ENCODE measurements at regions of chr1 and their contacts with region 1.

Region 1: GRCh38 chr1:10788592-10789006 is 7.8 kb downstream of the CASZ1 start:
- DNase-seq: peak; percentile 70 to 88 (median 82)
- ATAC-seq: peak; percentile 90 to 96 (median 92)
- H3K4me3 ChIP-seq: peak overlapping the region in 6 of 12 donors; percentile 9 to 30 (median 20)
- H3K27ac ChIP-seq: peak overlapping the region in 10 of 12 donors; percentile 7 to 95 (median 52)
- H3K4me1 ChIP-seq: peaks cover 0 to 93% (median 44%) of the 10 kb centered on the region in 12 donors
- H3K27me3 ChIP-seq: peaks cover 0 to 38% (median 0%) of the 10 kb centered on the region in 9 donors
- CTCF ChIP-seq: peak in 11 of 12 donors; percentile 48 to 74 (median 52)
- POLR2A ChIP-seq: no peak

Region 2: GRCh38 chr1:10530281-10530740 is 258.3 kb before region 1 on chr1:
- intact Hi-C with region 1: loop called in 4 of 10 experiments (anchors 5 to 10 kb)
- DNase-seq: peak in 4 of 5 donors; percentile 35 to 68 (median 38)
- ATAC-seq: peak in 3 of 4 donors; percentile 17 to 61 (median 35)
- H3K4me3 ChIP-seq: no peak overlapping the region
- H3K27ac ChIP-seq: peak overlapping the region in 3 of 12 donors; percentile 3 to 71 (median 66)
- H3K4me1 ChIP-seq: peaks cover 0 to 51% (median 31%) of the 10 kb centered on the region in 12 donors
- H3K27me3 ChIP-seq: no peaks in the 10 kb centered on the region
- CTCF ChIP-seq: peak; percentile 39 to 78 (median 68)
- POLR2A ChIP-seq: no peak

Region 3: DNA sequence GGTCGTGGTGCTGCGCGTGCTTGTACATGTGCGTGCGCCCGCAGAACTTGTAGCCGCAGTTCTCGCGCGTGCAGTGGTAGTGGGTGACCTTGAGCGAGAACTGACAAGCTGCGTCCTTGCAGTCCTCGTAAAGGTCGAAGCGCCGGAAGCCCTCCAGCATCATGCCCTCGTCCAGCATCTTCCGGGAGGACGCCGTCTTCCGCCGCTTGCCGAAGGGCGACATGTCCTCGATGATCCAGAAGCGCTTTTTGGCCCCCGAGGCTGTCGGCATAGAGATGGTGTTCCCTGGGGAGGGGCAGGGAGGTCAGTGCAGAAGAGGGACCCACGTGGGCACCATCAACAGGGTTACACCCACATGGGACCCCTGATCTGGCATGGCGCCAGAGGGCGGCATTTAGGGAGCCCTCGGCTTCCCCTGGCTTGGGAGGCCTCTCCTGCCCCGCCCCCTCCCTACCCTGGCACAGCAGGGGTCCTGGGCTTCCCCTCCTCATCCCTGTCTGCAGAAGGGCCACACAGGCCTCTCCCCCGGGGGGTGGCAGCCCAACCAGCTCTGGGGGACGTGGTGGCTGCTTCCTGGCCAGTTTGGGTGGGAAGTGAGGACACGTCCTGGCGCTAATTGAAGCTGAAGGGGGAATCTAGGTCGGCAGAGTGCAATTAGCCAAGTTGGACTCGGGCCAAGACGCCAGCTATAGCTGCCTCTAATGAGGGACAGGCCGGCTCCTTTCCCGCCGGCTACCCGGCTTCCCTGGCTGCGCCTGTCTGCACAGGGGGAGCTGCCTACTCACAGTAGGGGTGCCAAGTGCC is 148.6 kb before region 1 on chr1:
- intact Hi-C with region 1: no loop called
- DNase-seq: peak in 4 of 5 donors; percentile 48 to 79 (median 76)
- ATAC-seq: peak; percentile 31 to 66 (median 57)
- H3K4me3 ChIP-seq: no peak overlapping the region
- H3K27ac ChIP-seq: peak overlapping the region in 5 of 12 donors; percentile 1 to 83 (median 46)
- H3K4me1 ChIP-seq: peaks cover 0 to 35% (median 21%) of the 10 kb centered on the region in 12 donors
- H3K27me3 ChIP-seq: peaks cover 0 to 7% (median 0%) of the 10 kb centered on the region in 9 donors
- CTCF ChIP-seq: no peak
- POLR2A ChIP-seq: no peak

Region 4: GRCh38 chr1:10714337-10715114 is 74.1 kb before region 1 on chr1:
- intact Hi-C with region 1: loop called in 1 of 10 experiments (anchors 10 kb)
- DNase-seq: peak in 4 of 5 donors; percentile 74 to 82 (median 78)
- ATAC-seq: peak; percentile 74 to 83 (median 81)
- H3K4me3 ChIP-seq: no peak overlapping the region
- H3K27ac ChIP-seq: peak overlapping the region in 11 of 12 donors; percentile 31 to 86 (median 71)
- H3K4me1 ChIP-seq: peaks cover 3 to 84% (median 48%) of the 10 kb centered on the region in 12 donors
- H3K27me3 ChIP-seq: peaks cover 0 to 8% (median 0%) of the 10 kb centered on the region in 9 donors
- CTCF ChIP-seq: no peak
- POLR2A ChIP-seq: no peak

Region 5: DNA sequence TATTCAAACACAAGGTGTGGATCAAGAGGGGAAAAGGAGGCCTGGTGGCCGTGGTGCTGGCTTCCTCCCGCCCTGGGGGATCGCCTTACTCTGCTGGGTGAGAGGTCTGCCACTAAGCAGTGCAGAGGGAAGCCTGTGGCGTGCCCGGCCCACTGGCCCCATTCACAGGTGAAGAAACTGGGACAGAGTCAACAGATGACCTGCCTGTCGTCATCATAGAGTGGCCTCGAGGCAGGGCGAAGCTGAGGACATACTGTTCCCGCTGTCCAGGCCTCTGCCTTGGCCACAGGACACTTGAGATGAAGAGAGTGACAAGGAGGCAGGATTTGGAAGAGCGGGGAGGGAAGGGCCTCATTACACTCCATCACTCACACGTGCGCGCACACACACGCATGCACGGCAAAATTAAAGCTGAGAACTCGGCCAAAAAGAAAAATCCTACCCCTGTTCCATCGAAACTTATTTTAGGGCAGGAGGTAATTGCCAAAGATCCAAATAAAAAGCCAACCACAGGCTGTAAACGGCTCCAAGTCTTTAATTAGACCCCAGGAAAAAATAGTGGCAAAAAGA is 42.6 kb before region 1 on chr1:
- intact Hi-C with region 1: loop called in 2 of 10 experiments (anchors 5 kb)
- DNase-seq: peak in 2 of 5 donors; percentile 58 to 89
- ATAC-seq: peak; percentile 55 to 91 (median 78)
- H3K4me3 ChIP-seq: no peak overlapping the region
- H3K27ac ChIP-seq: peak overlapping the region in 10 of 12 donors; percentile 17 to 87 (median 60)
- H3K4me1 ChIP-seq: peaks cover 0 to 65% (median 20%) of the 10 kb centered on the region in 12 donors
- H3K27me3 ChIP-seq: no peaks in the 10 kb centered on the region
- CTCF ChIP-seq: no peak
- POLR2A ChIP-seq: no peak

Region 6: GRCh38 chr1:10813799-10814198 is 25.2 kb after region 1 on chr1:
- intact Hi-C with region 1: no loop called
- DNase-seq: no peak
- ATAC-seq: no peak
- H3K4me3 ChIP-seq: no peak overlapping the region
- H3K27ac ChIP-seq: no peak overlapping the region
- H3K4me1 ChIP-seq: peaks cover 0 to 7% (median 0%) of the 10 kb centered on the region in 12 donors
- H3K27me3 ChIP-seq: peaks cover 0 to 14% (median 0%) of the 10 kb centered on the region in 9 donors
- CTCF ChIP-seq: no peak
- POLR2A ChIP-seq: no peak

Region 7: DNA sequence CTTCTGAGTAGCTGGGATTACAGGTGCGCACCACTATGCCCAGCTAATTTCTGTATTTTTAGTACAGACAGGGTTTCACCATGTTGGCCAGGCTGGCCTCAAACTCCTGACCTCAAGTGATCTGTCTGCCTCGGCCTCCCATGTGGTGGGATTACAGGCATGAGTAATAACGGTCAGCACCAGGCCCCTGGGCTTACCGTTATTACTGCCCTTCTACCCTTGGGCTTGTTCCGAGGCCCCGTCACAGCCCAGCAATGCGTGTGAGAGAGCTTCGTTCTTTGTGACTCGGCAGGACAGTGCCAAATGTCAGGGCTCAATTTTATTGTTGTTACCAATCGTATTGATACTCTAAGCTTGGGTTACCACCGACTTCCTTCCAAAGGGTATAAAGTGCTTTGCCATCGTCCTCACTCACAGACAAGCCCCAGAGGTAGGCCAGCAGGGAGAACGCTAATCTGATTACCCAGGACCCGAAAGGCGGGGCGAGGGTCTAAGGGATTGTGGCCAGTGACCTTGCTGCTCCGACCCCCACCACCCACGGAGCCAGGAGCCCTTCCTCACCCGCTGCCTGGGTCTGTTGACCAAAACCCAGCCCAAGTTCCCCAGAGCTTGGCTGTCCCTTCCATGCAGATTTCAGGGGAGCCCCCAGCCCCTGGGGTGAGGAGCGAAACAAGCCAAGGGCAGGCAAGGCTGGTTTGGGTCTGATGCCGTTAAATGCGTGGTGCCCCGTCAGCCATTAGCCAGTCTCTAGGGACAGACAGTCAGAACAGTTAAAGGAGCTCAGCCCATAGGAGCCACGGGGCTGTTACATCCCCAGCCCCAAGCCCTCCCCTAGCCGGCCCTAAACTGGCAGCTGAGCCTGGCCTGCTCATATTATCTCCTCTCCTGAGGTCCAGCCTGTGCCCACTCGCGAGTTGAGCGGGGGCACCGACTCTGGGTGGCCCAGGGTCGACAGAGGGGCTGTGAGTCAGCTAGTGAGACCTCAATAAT is 62.7 kb after region 1 on chr1:
- intact Hi-C with region 1: no loop called
- DNase-seq: peak in 1 of 5 donors; percentile 25
- ATAC-seq: peak in 3 of 4 donors; percentile 17 to 42 (median 18)
- H3K4me3 ChIP-seq: no peak overlapping the region
- H3K27ac ChIP-seq: no peak overlapping the region
- H3K4me1 ChIP-seq: peaks cover 0 to 12% (median 0%) of the 10 kb centered on the region in 12 donors
- H3K27me3 ChIP-seq: no peaks in the 10 kb centered on the region
- CTCF ChIP-seq: no peak
- POLR2A ChIP-seq: no peak